ENCODE measurements at regions of chr2 and their contacts with region 1.

Region 1: GRCh38 chr2:222318026-222318711 is 19.4 kb upstream of the PAX3 start:
- DNase-seq: peak; percentile 76
- H3K4me3 ChIP-seq: peak overlapping the region; percentile 8 to 61 (median 44)
- H3K27ac ChIP-seq: no peak overlapping the region
- H3K4me1 ChIP-seq: peaks cover 16% of the 10 kb centered on the region
- H3K27me3 ChIP-seq: peaks cover 52 to 81% of the 10 kb centered on the region in 2 experiments
- CTCF ChIP-seq: peak; percentile 24 to 39
- POLR2A ChIP-seq: no peak

Region 2: DNA sequence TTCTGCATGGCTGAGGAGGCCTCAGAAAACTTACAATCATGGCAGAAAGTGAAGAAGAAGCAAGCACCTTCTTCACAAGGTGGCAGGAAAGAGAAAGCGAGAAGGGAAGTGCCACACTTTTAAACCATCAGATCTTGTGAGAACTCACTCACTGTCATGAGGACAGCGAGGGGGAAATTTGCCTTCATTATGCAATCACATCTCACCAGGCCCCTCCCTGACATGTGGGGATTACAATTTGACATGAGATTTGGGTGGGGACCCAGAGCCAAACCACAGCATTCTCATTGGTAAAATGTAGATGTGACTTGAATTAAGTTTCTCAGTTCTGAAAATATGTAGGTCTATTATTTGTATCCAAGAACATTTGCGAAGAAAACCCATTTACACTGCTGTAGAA is 1600.9 kb before region 1 on chr2:
- CTCF ChIA-PET with region 1: no interaction called
- POLR2A ChIA-PET with region 1: no interaction called
- dilution Hi-C with region 1: no loop called
- intact Hi-C with region 1: no loop called
- DNase-seq: no peak
- H3K4me3 ChIP-seq: no peak overlapping the region
- H3K27ac ChIP-seq: no peak overlapping the region
- H3K4me1 ChIP-seq: no peaks in the 10 kb centered on the region
- H3K27me3 ChIP-seq: no peaks in the 10 kb centered on the region
- CTCF ChIP-seq: no peak
- POLR2A ChIP-seq: no peak

Region 3: DNA sequence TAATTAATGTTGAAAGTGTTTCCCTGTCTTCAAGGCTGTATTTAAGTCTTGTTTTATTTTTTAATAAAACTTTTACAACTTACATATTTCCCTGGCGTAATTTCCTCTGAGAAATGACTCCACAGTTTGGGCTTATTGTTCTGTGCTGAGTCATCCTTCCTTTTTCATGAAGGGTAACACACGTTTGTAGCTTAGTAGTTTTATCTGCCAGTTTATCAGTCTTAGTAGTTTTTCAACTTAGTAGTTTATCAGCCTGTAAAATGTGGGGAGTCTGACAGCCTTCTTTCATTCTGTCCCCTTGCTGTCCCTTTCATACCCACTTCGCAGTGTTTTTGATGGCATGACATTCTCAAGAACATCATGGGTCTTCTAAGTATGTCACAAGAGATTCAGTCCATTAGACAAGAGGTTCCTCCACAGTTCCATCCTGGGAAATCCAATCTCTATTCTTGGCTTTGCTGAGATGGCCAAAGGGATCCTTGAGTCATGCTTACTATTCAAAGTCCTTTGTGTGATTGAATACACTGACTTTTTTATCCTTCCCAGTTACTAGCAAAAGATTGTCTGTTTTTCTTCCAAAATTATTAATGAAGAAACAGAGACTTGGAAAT is 46.2 kb after region 1 on chr2:
- CTCF ChIA-PET with region 1: interaction called, 10 read pairs
- POLR2A ChIA-PET with region 1: no interaction called
- dilution Hi-C with region 1: no loop called
- intact Hi-C with region 1: loop called (anchors 1 kb)
- DNase-seq: peak; percentile 93
- H3K4me3 ChIP-seq: peak overlapping the region in 1 of 3 experiments; percentile 33
- H3K27ac ChIP-seq: peak overlapping the region; percentile 99
- H3K4me1 ChIP-seq: peaks cover 20% of the 10 kb centered on the region
- H3K27me3 ChIP-seq: no peaks in the 10 kb centered on the region
- CTCF ChIP-seq: no peak
- POLR2A ChIP-seq: no peak

Region 4: GRCh38 chr2:222483513-222484039 is 165.4 kb after region 1 on chr2:
- CTCF ChIA-PET with region 1: interaction called, 36 read pairs
- POLR2A ChIA-PET with region 1: no interaction called
- dilution Hi-C with region 1: no loop called
- intact Hi-C with region 1: loop called (anchors 2 kb)
- DNase-seq: no peak
- H3K4me3 ChIP-seq: no peak overlapping the region
- H3K27ac ChIP-seq: no peak overlapping the region
- H3K4me1 ChIP-seq: no peaks in the 10 kb centered on the region
- H3K27me3 ChIP-seq: peaks cover 2% of the 10 kb centered on the region in 2 experiments
- CTCF ChIP-seq: no peak
- POLR2A ChIP-seq: no peak

Region 5: GRCh38 chr2:222572751-222573174 is 254.6 kb after region 1 on chr2:
- CTCF ChIA-PET with region 1: interaction called, 14 read pairs
- POLR2A ChIA-PET with region 1: no interaction called
- dilution Hi-C with region 1: no loop called
- intact Hi-C with region 1: no loop called
- DNase-seq: peak; percentile 8
- H3K4me3 ChIP-seq: no peak overlapping the region
- H3K27ac ChIP-seq: no peak overlapping the region
- H3K4me1 ChIP-seq: peaks cover 10% of the 10 kb centered on the region
- H3K27me3 ChIP-seq: no peaks in the 10 kb centered on the region
- CTCF ChIP-seq: no peak
- POLR2A ChIP-seq: no peak

Region 6: DNA sequence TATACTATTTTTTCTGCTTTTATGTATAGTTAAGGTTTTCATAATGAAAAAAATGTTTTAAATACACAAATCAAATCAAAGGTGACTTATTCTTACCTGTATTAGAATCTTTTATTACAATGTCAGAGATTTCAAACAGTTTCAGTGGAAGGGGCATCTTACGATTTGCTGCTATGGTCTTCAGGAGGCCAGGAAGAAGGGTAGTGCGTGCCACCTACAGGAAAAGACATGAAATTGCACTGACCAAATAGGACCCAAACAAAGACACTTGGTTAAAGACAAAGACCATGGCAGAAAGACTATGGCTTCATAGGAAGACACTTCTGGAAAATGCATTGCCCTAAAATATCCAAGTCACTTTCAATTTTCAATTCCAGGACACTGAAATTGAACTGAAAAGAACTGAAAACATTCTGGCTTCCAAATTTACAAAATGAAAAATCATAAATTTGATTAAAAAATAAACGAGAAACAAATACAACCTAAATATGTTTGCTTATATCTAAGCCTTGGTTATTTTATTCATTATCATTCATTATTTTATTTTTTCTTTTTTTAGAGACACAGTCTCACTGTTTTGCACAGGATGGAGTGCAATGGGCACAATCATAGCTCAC is 295.7 kb after region 1 on chr2:
- CTCF ChIA-PET with region 1: interaction called, 49 read pairs
- POLR2A ChIA-PET with region 1: no interaction called
- dilution Hi-C with region 1: no loop called
- intact Hi-C with region 1: loop called (anchors 1 kb)
- DNase-seq: peak; percentile 57
- H3K4me3 ChIP-seq: no peak overlapping the region
- H3K27ac ChIP-seq: no peak overlapping the region
- H3K4me1 ChIP-seq: no peaks in the 10 kb centered on the region
- H3K27me3 ChIP-seq: no peaks in the 10 kb centered on the region
- CTCF ChIP-seq: peak; percentile 63 to 69
- POLR2A ChIP-seq: no peak

Region 7: GRCh38 chr2:223297788-223298187 is 979.6 kb after region 1 on chr2:
- CTCF ChIA-PET with region 1: no interaction called
- POLR2A ChIA-PET with region 1: no interaction called
- dilution Hi-C with region 1: no loop called
- intact Hi-C with region 1: no loop called
- DNase-seq: no peak
- H3K4me3 ChIP-seq: no peak overlapping the region
- H3K27ac ChIP-seq: no peak overlapping the region
- H3K4me1 ChIP-seq: no peaks in the 10 kb centered on the region
- H3K27me3 ChIP-seq: no peaks in the 10 kb centered on the region
- CTCF ChIP-seq: no peak
- POLR2A ChIP-seq: no peak